Activated T-helper 2 cell treated with anti-CD3 and anti-CD28 coated beads, Interferon-gamma antibody, Interleukin-2, Interleukin-4, amounts not matched to agents 10 μg/mL and 5 μg/mL and 100 μg/mL, durations not matched to agents 14 hours and 24 hours and 36 hours (primary cell): ENCODE measurements at regions of chr3 and their contacts with region 1.

Region 1: DNA sequence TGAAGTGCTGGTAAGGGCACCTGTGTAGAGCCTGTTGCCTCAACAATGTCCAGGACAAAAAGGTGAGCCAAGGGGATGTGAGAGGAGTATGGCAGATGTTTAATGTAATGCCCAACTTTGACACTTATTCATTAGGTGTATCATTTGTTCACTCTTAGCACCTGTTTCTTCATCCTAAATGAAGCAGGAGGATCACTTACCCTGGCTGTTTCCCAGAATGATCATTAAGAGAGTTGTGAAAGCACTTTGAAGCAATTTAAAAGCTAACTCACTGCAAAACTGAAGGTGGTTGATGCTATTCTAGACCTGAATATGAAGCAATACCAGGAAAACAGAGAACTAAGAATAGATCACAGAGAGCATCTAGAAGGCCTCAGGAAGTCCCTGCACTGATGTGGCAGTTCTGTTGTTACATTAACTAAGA is 3.4 kb upstream of the HHLA2 start:
- DNase-seq: no peak
- H3K4me3 Mint-ChIP-seq: no peak overlapping the region
- H3K27ac Mint-ChIP-seq: peak overlapping the region; percentile 80
- H3K4me1 Mint-ChIP-seq: peaks cover 60% of the 10 kb centered on the region
- H3K27me3 Mint-ChIP-seq: no peaks in the 10 kb centered on the region

Region 2: GRCh38 chr3:107870943-107871638 is 421.8 kb before region 1 on chr3:
- intact Hi-C with region 1: loop called (anchors 10 kb)
- DNase-seq: no peak
- H3K4me3 Mint-ChIP-seq: no peak overlapping the region
- H3K27ac Mint-ChIP-seq: no peak overlapping the region
- H3K4me1 Mint-ChIP-seq: peaks cover 11% of the 10 kb centered on the region
- H3K27me3 Mint-ChIP-seq: peaks cover 4% of the 10 kb centered on the region

Region 3: DNA sequence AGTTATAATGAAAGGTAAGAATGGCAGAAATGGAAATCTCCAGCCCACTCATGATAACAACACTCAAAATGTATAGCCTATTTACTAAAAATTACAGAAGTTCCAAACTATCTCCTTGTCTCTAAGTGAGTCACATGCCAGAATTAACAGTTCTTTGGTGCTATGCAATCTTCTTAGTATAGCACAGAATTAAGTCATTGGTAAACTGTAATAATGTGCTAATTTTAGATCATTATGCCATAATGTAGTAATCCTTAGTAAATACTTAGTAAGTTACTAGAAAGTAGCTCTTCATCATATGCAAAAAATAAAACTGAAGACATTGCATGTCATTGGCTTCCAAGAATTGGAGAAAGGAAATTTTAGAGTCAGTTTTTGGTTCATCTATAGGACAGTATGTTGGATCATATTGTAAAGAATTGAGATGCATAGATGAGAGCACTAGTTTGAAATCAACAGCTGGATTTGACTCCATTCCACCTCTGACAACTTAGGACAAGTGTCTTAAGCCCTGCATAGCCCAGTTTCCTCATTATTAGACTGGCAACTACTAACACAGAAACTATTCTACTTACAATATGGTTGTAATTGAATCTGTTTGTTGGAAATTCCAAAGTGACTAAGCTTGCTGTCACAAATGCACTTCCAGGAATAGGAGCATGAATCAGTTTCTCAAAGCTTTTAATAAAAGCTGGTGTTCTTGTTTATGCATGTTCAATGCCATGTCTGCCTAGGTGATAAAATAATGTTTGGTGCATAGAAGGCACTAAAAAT is 162.0 kb before region 1 on chr3:
- intact Hi-C with region 1: loop called (anchors 2 kb)
- DNase-seq: no peak
- H3K4me3 Mint-ChIP-seq: peak overlapping the region; percentile 27
- H3K27ac Mint-ChIP-seq: peak overlapping the region; percentile 91
- H3K4me1 Mint-ChIP-seq: peaks cover 80% of the 10 kb centered on the region
- H3K27me3 Mint-ChIP-seq: no peaks in the 10 kb centered on the region

Region 4: DNA sequence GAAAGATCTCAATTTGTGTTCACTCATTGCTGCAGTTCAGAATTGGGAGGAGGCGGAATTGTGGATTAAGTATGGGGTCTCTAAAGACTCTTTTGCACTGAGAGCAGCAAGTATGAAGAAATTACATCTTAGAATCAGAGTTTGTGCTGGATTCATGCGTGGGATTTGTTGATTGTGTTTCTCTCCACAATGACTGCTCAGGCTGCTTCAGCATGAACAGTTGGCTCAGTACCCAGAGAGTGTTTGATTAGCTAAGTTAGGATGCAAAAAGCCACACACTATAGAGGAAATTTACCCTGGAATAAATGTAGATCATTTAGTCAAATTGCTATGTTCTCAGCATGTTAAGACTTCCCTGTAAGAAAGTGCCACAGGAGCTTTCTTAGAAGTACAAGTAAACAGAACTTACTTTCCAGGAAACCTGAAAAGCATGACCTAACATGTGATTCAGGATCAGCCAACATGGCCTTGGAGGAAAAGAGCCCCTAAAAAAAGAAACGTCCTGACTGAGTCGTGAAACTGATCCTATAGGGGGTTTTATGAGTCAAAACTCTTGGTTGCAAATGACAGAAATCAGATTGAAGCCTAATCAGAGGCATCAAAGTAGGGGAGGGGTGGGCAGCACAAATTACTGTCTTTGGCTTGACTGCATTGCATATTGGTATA is 36.0 kb after region 1 on chr3:
- intact Hi-C with region 1: loop called (anchors 1 kb)
- DNase-seq: no peak
- H3K4me3 Mint-ChIP-seq: no peak overlapping the region
- H3K27ac Mint-ChIP-seq: peak overlapping the region; percentile 15
- H3K4me1 Mint-ChIP-seq: peaks cover 40% of the 10 kb centered on the region
- H3K27me3 Mint-ChIP-seq: no peaks in the 10 kb centered on the region

Region 5: GRCh38 chr3:108394563-108394962 is 101.6 kb after region 1 on chr3:
- intact Hi-C with region 1: no loop called
- DNase-seq: no peak
- H3K4me3 Mint-ChIP-seq: no peak overlapping the region
- H3K27ac Mint-ChIP-seq: no peak overlapping the region
- H3K4me1 Mint-ChIP-seq: no peaks in the 10 kb centered on the region
- H3K27me3 Mint-ChIP-seq: peaks cover 27% of the 10 kb centered on the region

Region 6: DNA sequence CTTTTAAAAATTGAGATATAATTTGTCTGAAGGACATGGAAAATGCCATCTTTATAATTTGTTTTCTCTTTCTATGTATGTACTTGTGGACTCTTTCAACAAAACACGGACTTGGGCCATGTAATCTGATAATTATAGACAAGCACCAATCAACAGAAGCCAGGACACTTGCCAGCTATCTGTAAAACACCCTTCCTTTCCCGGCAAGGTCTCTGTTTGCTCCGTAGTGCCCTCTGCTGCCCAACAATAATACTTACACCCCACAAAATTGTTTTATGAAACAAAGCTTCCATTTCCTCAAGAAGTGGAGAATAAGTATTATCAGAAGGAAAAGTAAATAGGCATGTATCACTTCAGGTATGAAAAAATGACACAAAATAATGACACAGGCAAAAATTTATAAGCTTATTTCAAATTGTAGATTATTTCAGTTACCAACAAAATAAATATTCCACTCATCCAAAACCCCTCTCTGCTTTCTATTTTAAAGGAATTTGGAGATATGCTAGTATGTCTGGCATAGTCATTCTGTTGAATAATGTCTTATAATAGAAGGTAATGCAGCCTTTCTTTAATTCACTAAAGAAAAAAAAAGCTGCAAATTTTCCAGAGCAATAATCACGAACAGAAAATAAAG is 184.7 kb after region 1 on chr3:
- intact Hi-C with region 1: loop called (anchors 5 kb)
- DNase-seq: peak; percentile 36
- H3K4me3 Mint-ChIP-seq: no peak overlapping the region
- H3K27ac Mint-ChIP-seq: no peak overlapping the region
- H3K4me1 Mint-ChIP-seq: peaks cover 1% of the 10 kb centered on the region
- H3K27me3 Mint-ChIP-seq: peaks cover 12% of the 10 kb centered on the region